ENCODE measurements at regions of chr14 and their contacts with region 1.

Region 1: DNA sequence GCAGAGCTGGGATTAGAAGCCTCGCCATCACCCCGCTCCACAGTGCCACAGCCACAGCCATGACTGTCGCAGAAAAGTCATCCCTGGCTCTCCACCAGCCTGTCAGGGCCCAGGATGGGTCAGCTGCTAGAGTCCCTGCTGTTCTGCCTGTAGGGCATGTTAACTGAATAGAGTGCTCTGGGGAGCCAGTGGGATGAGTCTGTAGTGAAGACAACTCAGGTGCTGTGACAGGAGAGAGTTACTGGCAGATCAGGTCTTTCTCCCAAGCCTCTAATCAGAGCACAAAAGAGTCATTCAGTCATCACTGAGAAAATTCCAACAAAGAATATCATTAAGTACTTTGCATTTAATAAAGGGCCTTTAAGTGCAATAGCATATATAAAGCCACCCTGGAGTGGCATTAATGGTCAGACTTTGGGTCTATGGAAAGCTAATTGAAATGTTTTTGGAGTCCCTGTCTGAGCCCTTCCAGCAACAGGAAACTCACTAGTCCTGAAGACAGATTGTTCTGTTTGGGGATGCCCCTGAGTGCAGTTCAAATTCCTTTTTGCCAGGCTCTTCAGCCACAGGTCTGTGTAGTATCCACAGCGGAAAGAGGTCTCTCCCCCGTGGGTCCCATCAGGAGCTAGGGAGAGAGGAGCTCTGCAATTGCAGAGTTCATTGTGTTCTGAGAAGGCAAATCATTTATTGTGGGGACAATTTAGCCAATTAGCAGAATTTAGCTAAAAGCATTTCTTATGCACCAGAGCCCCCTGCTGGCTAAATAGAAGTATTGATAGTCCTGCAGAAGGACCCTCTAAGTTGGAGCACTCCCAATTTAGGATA is 45.2 kb upstream of the C14orf132 start:
- DNase-seq: peak; percentile 11
- H3K4me3 ChIP-seq: no peak overlapping the region
- H3K27ac ChIP-seq: no peak overlapping the region
- H3K4me1 ChIP-seq: no peaks in the 10 kb centered on the region
- H3K27me3 ChIP-seq: no peaks in the 10 kb centered on the region
- CTCF ChIP-seq: peak; percentile 67 to 79

Region 2: GRCh38 chr14:95442633-95443021 is 551.4 kb before region 1 on chr14:
- CTCF ChIA-PET with region 1: no interaction called
- dilution Hi-C with region 1: no loop called
- in situ Hi-C with region 1: loop called (anchors 25 kb)
- intact Hi-C with region 1: loop called (anchors 1 kb)
- DNase-seq: peak; percentile 56
- H3K4me3 ChIP-seq: no peak overlapping the region
- H3K27ac ChIP-seq: no peak overlapping the region
- H3K4me1 ChIP-seq: no peaks in the 10 kb centered on the region
- H3K27me3 ChIP-seq: no peaks in the 10 kb centered on the region
- CTCF ChIP-seq: peak; percentile 93 to 95

Region 3: DNA sequence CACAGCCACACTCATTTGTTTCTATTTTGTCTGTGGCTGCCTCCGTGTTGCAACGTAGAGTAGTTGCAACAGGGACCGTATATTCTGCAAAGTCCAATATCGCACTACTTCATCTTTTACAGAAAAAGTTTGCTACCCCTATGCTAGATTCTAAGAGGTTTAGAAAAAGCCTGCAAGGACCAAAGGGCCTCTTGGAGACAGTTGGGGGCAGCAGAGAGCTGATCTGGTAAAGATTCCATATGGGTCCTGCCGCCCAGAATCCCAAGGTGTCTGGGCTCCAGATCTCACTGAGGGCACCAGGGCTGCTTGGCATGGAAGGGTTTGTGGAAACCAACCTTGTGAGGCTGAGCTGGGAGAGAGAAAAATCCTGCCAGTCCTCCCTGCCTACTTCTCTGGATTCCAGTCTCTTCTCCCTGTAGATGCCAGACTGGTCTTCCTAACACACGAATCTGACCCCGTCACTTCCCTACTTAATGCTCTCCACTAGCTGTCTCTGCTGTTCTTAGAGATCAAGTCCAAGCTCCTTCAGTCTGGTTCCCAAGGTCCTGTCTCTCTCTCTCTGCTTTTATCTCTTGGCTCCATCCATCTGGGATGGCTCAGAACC is 384.5 kb before region 1 on chr14:
- CTCF ChIA-PET with region 1: no interaction called
- dilution Hi-C with region 1: no loop called
- in situ Hi-C with region 1: no loop called
- intact Hi-C with region 1: loop called (anchors 1 kb)
- DNase-seq: peak; percentile 17
- H3K4me3 ChIP-seq: no peak overlapping the region
- H3K27ac ChIP-seq: no peak overlapping the region
- H3K4me1 ChIP-seq: no peaks in the 10 kb centered on the region
- H3K27me3 ChIP-seq: peaks cover 4% of the 10 kb centered on the region
- CTCF ChIP-seq: peak; percentile 41 to 65

Region 4: GRCh38 chr14:95774265-95775160 is 219.5 kb before region 1 on chr14:
- CTCF ChIA-PET with region 1: no interaction called
- dilution Hi-C with region 1: no loop called
- in situ Hi-C with region 1: no loop called
- intact Hi-C with region 1: loop called (anchors 5 kb)
- DNase-seq: peak; percentile 23
- H3K4me3 ChIP-seq: no peak overlapping the region
- H3K27ac ChIP-seq: no peak overlapping the region
- H3K4me1 ChIP-seq: no peaks in the 10 kb centered on the region
- H3K27me3 ChIP-seq: peaks cover 2% of the 10 kb centered on the region
- CTCF ChIP-seq: peak; percentile 82 to 85

Region 5: GRCh38 chr14:96051642-96052540 is 57.9 kb after region 1 on chr14:
- CTCF ChIA-PET with region 1: no interaction called
- dilution Hi-C with region 1: no loop called
- in situ Hi-C with region 1: no loop called
- intact Hi-C with region 1: loop called (anchors 1 kb)
- DNase-seq: peak; percentile 19
- H3K4me3 ChIP-seq: no peak overlapping the region
- H3K27ac ChIP-seq: no peak overlapping the region
- H3K4me1 ChIP-seq: no peaks in the 10 kb centered on the region
- H3K27me3 ChIP-seq: peaks cover 4% of the 10 kb centered on the region
- CTCF ChIP-seq: peak; percentile 31 to 34

Region 6: DNA sequence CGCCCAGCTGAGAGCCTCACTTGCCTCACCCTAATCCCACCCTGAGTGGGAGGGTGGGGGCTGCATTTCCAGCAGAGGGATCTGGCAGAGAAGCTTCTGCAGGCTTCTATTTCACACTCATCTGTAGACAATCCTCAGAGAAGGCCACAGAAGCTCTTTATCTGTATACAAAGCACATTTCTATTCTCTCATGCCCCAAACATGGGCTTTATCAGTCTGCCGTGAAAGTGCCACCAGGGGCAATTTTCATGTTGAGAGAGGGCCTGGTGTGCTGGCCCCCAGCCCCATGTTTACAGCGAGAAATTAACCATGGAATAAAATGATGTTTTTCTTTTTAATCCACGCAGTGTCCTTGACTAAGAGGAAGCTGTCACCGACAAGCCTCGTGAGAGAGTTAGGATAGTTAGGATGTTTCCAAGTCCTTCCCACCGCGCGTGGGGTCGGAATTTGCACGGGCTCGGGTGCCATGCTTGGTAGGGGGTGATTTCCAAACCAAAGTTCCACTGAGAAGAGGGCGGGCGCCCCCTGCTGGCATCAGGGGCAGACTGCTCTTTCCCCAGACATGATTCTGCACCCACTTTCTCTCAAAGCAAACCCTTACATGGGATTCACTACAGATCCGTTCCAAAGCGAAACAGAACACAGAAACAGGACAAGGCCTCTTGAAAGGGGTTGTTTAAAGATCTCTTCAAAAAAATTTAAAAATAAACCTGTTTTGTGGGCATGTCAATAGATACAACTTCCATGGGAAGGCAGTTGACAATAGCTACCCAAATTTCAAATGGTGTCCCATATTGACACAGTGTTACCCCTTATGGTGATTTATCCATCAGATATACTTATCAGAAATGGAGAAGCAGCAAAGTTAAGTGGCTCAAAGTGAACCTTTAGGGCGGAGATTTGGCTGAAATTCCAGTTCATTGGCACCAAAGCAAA is 281.5 kb after region 1 on chr14:
- CTCF ChIA-PET with region 1: no interaction called
- dilution Hi-C with region 1: no loop called
- in situ Hi-C with region 1: no loop called
- intact Hi-C with region 1: loop called (anchors 1 kb)
- DNase-seq: peak; percentile 29
- H3K4me3 ChIP-seq: no peak overlapping the region
- H3K27ac ChIP-seq: no peak overlapping the region
- H3K4me1 ChIP-seq: peaks cover 10% of the 10 kb centered on the region
- H3K27me3 ChIP-seq: no peaks in the 10 kb centered on the region
- CTCF ChIP-seq: peak; percentile 97 to 99

Region 7: DNA sequence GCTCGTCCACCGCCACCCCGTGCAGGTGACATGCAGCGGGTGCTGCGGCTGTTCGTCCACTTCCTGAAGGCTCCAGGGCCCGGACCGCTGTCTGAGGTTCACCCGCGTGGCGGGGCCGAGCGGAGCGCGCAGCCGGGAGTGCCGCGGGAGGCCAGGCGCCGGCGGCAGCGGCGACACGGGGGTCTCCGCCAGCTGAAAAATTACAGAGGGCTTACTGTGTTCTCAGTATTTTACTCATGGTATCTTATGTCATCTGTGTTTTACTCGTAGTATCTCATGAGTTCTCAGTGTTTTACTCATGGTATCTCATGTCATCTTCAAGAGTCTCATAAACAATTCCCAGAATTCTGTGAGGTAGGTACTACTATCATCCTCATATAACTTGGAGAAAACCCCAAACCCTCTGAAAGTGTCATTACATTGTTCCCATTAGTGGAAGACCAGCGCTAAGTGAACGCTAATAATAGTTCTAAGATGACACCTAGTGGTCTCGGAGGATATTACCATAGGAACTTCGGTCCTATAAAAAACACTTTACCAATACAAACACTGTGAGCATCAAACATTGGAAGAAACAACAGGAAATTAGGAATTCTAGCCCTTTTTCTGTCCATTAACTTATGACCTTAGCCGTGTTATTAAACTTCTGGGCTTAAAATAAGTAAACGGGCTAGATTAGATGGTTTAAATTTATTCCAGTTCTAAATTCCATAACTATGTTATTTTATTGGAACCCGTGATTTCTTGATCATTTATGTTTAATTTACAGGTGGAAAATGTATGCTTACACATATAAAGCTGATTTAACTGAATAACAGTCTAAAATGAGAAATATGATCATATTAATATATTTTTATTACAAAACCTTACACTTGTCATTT is 430.4 kb after region 1 on chr14:
- CTCF ChIA-PET with region 1: no interaction called
- dilution Hi-C with region 1: no loop called
- in situ Hi-C with region 1: no loop called
- intact Hi-C with region 1: loop called (anchors 5 kb)
- DNase-seq: peak; percentile 65
- H3K4me3 ChIP-seq: peak overlapping the region; percentile 36 to 45 (median 42)
- H3K27ac ChIP-seq: no peak overlapping the region
- H3K4me1 ChIP-seq: peaks cover 5% of the 10 kb centered on the region
- H3K27me3 ChIP-seq: no peaks in the 10 kb centered on the region
- CTCF ChIP-seq: peak; percentile 67 to 79

Measured in mammary epithelial cell (primary cell).